HepG2 (cell line): ENCODE measurements at regions of chr2 and their contacts with region 1.

Region 1: GRCh38 chr2:222087987-222088960 is 210.5 kb downstream of the PAX3 start:
- DNase-seq: no peak
- ATAC-seq: no peak
- H3K4me3 ChIP-seq: no peak overlapping the region
- H3K27ac ChIP-seq: no peak overlapping the region
- H3K4me1 ChIP-seq: no peaks in the 10 kb centered on the region
- H3K27me3 ChIP-seq: no peaks in the 10 kb centered on the region
- CTCF ChIP-seq: no peak
- EP300 ChIP-seq: no peak
- POLR2A ChIP-seq: no peak
- RAD21 ChIP-seq: no peak

Region 2: GRCh38 chr2:223243233-223243632 is 1155.0 kb after region 1 on chr2:
- CTCF ChIA-PET with region 1: no interaction called
- POLR2A ChIA-PET with region 1: no interaction called
- in situ Hi-C with region 1: no loop called
- intact Hi-C with region 1: loop called (anchors 5 kb)
- DNase-seq: no peak
- ATAC-seq: no peak
- H3K4me3 ChIP-seq: no peak overlapping the region
- H3K27ac ChIP-seq: no peak overlapping the region
- H3K4me1 ChIP-seq: no peaks in the 10 kb centered on the region
- H3K27me3 ChIP-seq: no peaks in the 10 kb centered on the region
- CTCF ChIP-seq: no peak
- EP300 ChIP-seq: no peak
- POLR2A ChIP-seq: no peak
- RAD21 ChIP-seq: no peak